ENCODE measurements at regions of chr13 and their contacts with region 1.

Region 1: GRCh38 chr13:100176801-100177400 is 88.0 kb downstream of the PCCA start:
- DNase-seq: peak; percentile 18
- H3K4me3 ChIP-seq: no peak overlapping the region
- H3K27ac ChIP-seq: no peak overlapping the region
- H3K4me1 ChIP-seq: no peaks in the 10 kb centered on the region
- H3K27me3 ChIP-seq: no peaks in the 10 kb centered on the region
- CTCF ChIP-seq: no peak
- POLR2A ChIP-seq: no peak

Region 2: GRCh38 chr13:98672944-98673545 is 1503.9 kb before region 1 on chr13:
- CTCF ChIA-PET with region 1: no interaction called
- POLR2A ChIA-PET with region 1: no interaction called
- dilution Hi-C with region 1: no loop called
- intact Hi-C with region 1: no loop called
- DNase-seq: peak; percentile 67
- H3K4me3 ChIP-seq: no peak overlapping the region
- H3K27ac ChIP-seq: no peak overlapping the region
- H3K4me1 ChIP-seq: no peaks in the 10 kb centered on the region
- H3K27me3 ChIP-seq: peaks cover 6% of the 10 kb centered on the region in 2 experiments
- CTCF ChIP-seq: peak; percentile 77 to 78
- POLR2A ChIP-seq: no peak

Region 3: GRCh38 chr13:100163375-100163774 is 13.5 kb before region 1 on chr13:
- CTCF ChIA-PET with region 1: interaction called, 3 read pairs
- POLR2A ChIA-PET with region 1: no interaction called
- dilution Hi-C with region 1: no loop called
- intact Hi-C with region 1: loop called (anchors 2 kb)
- DNase-seq: no peak
- H3K4me3 ChIP-seq: no peak overlapping the region
- H3K27ac ChIP-seq: no peak overlapping the region
- H3K4me1 ChIP-seq: no peaks in the 10 kb centered on the region
- H3K27me3 ChIP-seq: no peaks in the 10 kb centered on the region
- CTCF ChIP-seq: no peak
- POLR2A ChIP-seq: no peak

Measured in endothelial cell of umbilical vein (primary cell).